ENCODE measurements at regions of chr17 and their contacts with region 1.

Region 1: GRCh38 chr17:43760254-43760852 is 1.8 kb upstream of the SOST start:
- DNase-seq: peak; percentile 92
- ATAC-seq: peak; percentile 97 to 100 (median 98)
- H3K4me3 ChIP-seq: no peak overlapping the region
- H3K27ac ChIP-seq: no peak overlapping the region
- H3K4me1 ChIP-seq: peaks cover 0 to 2% (median 0%) of the 10 kb centered on the region in 4 donors
- H3K27me3 ChIP-seq: peaks cover 0 to 4% of the 10 kb centered on the region in 2 donors
- CTCF ChIP-seq: peak; percentile 99 to 100 (median 100)
- POLR2A ChIP-seq: no peak

Region 2: DNA sequence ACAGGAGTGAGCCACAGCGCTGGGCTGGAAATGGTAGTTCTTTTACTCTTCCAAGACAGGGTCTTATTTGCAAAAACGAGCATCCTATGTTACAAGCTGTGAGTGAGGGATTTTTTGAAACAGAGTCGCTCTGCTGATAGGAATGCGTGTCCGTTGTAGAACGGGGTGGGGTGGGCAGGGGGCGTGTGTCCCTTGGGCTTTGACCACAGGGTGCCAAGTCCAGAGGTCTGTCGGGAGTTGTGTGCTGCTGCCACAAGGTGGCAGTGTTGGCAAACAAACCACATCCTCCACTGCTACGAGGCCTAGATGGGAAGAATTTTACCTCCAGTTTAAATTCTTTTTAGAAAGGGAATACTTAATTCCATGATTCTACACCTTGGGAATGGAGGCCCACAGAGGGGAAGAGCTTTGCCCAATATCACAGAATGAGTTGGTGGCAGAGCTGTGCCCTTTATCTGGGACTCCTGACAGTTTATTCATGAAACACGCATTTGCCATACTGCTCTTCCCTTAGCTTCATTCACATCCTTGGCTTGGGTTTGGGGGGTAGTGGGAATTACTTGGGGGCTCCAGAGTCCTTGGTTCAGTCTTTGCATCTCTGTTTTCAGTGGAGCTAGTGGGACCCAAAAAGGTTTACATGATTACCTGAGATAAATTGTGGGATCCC is 183.7 kb before region 1 on chr17:
- intact Hi-C with region 1: loop called in 1 of 2 experiments (anchors 10 kb)
- DNase-seq: peak; percentile 63 to 73 (median 72)
- ATAC-seq: peak; percentile 79 to 87 (median 86)
- H3K4me3 ChIP-seq: no peak overlapping the region
- H3K27ac ChIP-seq: no peak overlapping the region
- H3K4me1 ChIP-seq: no peaks in the 10 kb centered on the region
- H3K27me3 ChIP-seq: no peaks in the 10 kb centered on the region
- CTCF ChIP-seq: peak; percentile 90 to 94 (median 90)
- POLR2A ChIP-seq: no peak

Region 3: DNA sequence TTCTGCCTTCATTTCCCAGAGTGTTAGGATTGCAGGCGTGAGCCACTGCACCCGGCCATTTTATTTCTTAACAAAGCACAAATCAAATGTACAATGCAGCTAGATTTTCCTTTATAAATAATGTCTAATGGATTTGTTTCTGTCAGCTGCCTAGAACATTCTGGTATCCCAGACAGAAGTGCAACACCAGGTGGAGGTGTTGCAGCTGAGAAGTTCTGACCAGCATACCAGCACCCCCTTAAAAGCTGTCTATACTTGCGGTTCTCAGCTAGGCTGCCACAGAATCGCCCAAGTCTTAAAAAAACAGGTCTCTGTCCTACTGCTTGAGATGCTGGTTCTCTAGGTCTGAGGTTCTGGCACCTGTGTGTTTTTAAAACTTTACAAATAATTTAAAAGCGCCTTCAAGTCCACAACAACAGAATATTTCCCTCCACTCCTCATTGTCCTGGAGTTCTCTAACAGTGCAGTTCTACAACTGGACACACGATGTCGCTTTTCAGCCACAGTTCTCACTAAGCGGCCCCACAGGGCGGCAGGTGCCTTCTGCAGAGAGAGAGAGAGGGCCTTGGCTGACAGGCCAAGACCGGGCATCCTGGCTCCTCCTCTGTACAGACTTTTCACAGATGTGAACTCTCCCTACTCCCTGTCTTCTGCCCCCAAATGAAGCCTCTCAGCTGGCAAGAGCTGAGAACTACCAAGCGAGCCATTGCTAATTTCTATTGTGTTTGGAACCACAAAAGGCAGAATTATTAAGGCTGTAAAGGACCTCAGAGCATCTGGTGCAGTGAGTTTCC is 66.1 kb before region 1 on chr17:
- intact Hi-C with region 1: loop called (anchors 2 to 5 kb)
- DNase-seq: peak; percentile 73 to 76 (median 74)
- ATAC-seq: peak; percentile 94 to 98 (median 96)
- H3K4me3 ChIP-seq: no peak overlapping the region
- H3K27ac ChIP-seq: no peak overlapping the region
- H3K4me1 ChIP-seq: no peaks in the 10 kb centered on the region
- H3K27me3 ChIP-seq: no peaks in the 10 kb centered on the region
- CTCF ChIP-seq: peak; percentile 89 to 94 (median 91)
- POLR2A ChIP-seq: no peak

Region 4: GRCh38 chr17:43846221-43846712 is 85.9 kb after region 1 on chr17:
- intact Hi-C with region 1: loop called in 1 of 2 experiments (anchors 10 kb)
- DNase-seq: peak; percentile 84 to 86 (median 85)
- ATAC-seq: peak; percentile 99 to 100 (median 99)
- H3K4me3 ChIP-seq: no peak overlapping the region
- H3K27ac ChIP-seq: no peak overlapping the region
- H3K4me1 ChIP-seq: peaks cover 0 to 11% (median 2%) of the 10 kb centered on the region in 4 donors
- H3K27me3 ChIP-seq: no peaks in the 10 kb centered on the region
- CTCF ChIP-seq: peak; percentile 92 to 99 (median 98)
- POLR2A ChIP-seq: no peak